GM13976 (cell line): ENCODE measurements at regions of chr9 and their contacts with region 1.

Region 1: DNA sequence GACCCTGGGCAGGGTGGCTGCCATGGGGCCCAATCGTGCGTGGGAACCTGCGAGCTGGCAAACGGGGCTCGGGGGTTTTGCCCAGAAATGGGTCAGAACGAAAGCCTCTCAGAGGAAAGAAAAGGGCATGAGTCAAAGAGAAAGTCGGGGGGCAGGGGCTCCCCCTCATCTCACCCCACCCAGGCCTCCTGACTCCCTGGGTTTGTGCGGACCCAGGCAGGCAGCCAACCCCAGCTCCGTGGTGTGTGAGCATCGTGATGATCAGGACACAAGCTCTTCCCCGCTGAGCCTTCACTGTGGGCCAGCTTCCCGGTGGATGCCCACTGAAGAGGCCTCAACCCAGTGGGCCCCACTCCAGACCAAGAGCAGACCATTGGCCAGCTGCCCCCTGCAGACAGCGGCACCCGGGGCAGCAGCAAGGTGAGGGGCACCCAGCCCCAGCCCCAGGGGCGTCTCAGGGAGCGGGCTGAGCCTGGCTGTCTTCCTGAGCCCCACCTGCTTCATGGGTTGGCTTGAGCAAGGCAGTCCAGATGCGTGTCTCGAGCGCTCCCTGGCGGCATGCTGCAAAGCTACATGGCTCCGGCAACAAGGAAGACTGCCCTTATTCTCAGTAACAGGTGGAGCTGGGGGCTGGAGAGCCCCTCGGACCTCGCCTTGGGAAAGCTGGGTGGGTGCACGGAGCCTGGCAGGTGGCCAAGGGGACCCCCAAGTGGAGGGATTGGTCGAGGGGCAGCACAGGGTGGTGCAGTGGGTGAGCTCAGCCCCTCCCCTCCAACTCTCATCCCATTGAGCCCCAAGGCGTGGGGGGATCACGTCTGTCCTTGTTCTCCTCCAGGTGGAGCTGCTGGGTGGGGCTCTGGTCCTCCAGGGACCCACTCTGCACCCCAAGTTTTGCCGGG is 3.2 kb upstream of the FUT7 start:
- DNase-seq: peak; percentile 95
- CTCF ChIP-seq: peak; percentile 99

Region 2: DNA sequence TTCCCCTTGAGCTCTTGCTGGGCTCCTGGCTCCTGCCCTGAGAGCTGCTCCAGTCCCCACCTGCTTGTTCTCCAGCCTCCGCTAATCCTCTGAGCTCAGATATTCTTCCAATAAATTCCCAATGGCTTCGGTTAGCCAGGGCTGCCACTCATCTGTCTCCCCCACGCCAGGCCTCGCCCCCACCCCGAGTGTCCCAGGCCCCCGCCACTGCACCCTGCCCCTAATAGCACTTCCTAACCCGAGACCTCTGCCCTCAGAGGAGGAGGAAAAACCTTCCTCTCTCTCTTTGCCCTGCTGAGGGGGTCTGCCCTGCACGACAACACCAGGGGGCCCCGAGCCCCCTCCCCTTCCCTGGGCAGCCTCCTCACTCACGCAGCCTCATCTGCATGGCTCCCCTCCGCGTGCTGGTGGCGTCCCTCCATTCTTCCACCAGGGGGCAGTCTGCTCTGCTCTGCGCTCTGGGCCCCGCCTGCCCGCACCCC is 265.4 kb before region 1 on chr9:
- in situ Hi-C with region 1: loop called (anchors 10 kb)
- DNase-seq: peak; percentile 81
- CTCF ChIP-seq: peak; percentile 76